ENCODE measurements at regions of chr4 and their contacts with region 1.

Region 1: GRCh38 chr4:47914220-47914925 is at the start of gene NFXL1:
- DNase-seq: peak; percentile 96
- ATAC-seq: peak; percentile 98
- H3K4me3 ChIP-seq: peak within 1 kb of the TSS; percentile 79
- H3K27ac ChIP-seq: peak within 1 kb of the TSS; percentile 78
- H3K4me1 ChIP-seq: no peaks in the 10 kb centered on the region
- H3K27me3 ChIP-seq: no peaks in the 10 kb centered on the region
- CTCF ChIP-seq: no peak
- POLR2A ChIP-seq: peak; percentile 85
- RAD21 ChIP-seq: no peak
- total RNA-seq, gene NFXL1: 21.9 and 23.1 TPM in 2 replicates

Region 2: GRCh38 chr4:47852136-47852535 is 62.2 kb before region 1 on chr4:
- CTCF ChIA-PET with region 1: no interaction called
- POLR2A ChIA-PET with region 1: no interaction called
- dilution Hi-C with region 1: no loop called
- in situ Hi-C with region 1: no loop called
- intact Hi-C with region 1: loop called (anchors 5 kb)
- DNase-seq: peak; percentile 92
- ATAC-seq: peak; percentile 86
- H3K4me3 ChIP-seq: no peak overlapping the region
- H3K27ac ChIP-seq: no peak overlapping the region
- H3K4me1 ChIP-seq: no peaks in the 10 kb centered on the region
- H3K27me3 ChIP-seq: no peaks in the 10 kb centered on the region
- CTCF ChIP-seq: no peak
- POLR2A ChIP-seq: no peak
- RAD21 ChIP-seq: no peak

Region 3: GRCh38 chr4:47891928-47892327 is 22.4 kb before region 1 on chr4:
- CTCF ChIA-PET with region 1: no interaction called
- POLR2A ChIA-PET with region 1: interaction called, 11 read pairs
- dilution Hi-C with region 1: no loop called
- in situ Hi-C with region 1: no loop called
- intact Hi-C with region 1: no loop called
- DNase-seq: no peak
- ATAC-seq: no peak
- H3K4me3 ChIP-seq: no peak overlapping the region
- H3K27ac ChIP-seq: no peak overlapping the region
- H3K4me1 ChIP-seq: peaks cover 5% of the 10 kb centered on the region; the same call in 1 of the 2 replicates
- H3K27me3 ChIP-seq: no peaks in the 10 kb centered on the region
- CTCF ChIP-seq: no peak
- POLR2A ChIP-seq: no peak
- RAD21 ChIP-seq: no peak